ENCODE measurements at regions of chrX and their contacts with region 1.

Region 1: DNA sequence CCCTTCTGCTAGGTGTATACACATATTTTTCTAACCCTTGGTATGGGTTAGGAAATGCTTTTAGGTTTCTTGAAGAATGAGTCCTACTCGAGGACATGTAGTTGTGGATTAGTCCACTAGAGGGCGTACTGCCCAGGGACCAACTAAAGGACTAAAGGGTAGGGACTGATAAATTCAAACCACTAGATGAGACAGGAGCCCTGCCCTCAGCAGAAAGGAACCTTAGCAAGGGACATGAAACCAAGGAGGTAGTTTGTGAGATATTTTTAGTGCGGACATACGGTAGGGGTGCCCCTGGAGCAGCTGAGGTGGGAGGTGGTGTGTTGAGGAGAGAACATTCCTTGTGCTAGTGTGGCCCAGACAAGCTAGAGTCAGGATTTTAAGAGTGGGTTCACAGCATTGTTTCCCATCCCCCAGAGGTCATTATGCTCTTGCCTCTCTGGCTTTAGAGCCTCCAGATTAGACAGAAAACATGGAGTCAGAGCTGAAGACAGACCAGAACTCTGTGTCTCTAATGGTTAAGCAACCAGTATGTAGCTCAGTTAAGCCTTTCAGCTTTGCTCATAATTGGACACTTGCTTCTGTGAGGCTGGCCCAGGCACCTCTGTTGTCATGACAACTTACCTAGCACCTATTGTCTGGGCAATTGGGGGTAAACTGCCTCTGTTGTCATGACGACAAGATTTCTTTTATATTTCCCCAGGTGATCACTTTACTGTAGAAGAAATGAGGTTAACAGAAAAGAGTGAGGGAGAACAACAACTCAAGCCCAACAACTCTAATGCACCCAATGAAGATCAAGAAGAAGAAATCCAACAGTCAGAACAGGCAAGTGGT is 1.0 kb downstream of the TMEM31 start:
- DNase-seq: peak; percentile 43 to 47
- H3K4me3 ChIP-seq: no peak overlapping the region
- H3K4me3 Mint-ChIP-seq: no peak overlapping the region
- H3K27ac Mint-ChIP-seq: no peak overlapping the region
- H3K4me1 ChIP-seq: no peaks in the 10 kb centered on the region
- H3K4me1 Mint-ChIP-seq: peaks cover 6% of the 10 kb centered on the region
- H3K27me3 ChIP-seq: no peaks in the 10 kb centered on the region
- H3K27me3 Mint-ChIP-seq: no peaks in the 10 kb centered on the region
- CTCF ChIP-seq: peak; percentile 46 to 47

Region 2: DNA sequence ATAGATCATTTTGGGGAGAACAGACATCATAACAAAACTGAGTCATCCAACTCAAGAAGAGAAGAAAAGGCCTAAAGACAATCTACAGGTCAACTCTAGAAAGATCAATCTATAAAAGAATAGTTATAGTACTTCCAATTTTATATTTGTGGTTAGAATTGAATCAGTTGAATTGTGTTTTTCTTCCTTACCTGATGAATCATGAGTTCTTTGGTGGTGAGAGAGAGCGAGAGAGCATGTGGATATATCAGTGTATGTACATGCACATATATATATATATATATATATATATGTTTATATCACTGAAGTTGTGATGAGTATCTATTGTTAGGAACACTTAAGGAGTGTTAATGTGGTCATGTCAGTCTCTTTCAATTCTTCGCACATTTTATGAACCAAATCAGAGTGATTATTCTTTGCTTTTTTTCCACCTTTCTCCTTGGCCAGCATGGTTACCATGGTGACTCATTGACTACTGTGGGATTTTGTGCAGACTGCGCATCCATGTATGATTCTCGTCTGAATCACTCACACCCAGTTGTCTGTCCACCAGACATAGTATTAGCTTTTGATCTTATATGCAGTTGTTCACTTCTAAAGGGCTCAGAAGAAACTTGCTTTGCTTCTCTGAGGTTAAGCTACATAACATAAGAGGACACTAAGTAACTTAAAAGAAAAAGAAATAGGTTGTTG is 865.1 kb before region 1 on chrX:
- CTCF ChIA-PET with region 1: no interaction called
- POLR2A ChIA-PET with region 1: no interaction called
- intact Hi-C with region 1: no loop called
- DNase-seq: no peak
- H3K4me3 ChIP-seq: no peak overlapping the region
- H3K4me3 Mint-ChIP-seq: no peak overlapping the region
- H3K27ac Mint-ChIP-seq: no peak overlapping the region
- H3K4me1 ChIP-seq: no peaks in the 10 kb centered on the region
- H3K4me1 Mint-ChIP-seq: no peaks in the 10 kb centered on the region
- H3K27me3 ChIP-seq: no peaks in the 10 kb centered on the region
- H3K27me3 Mint-ChIP-seq: no peaks in the 10 kb centered on the region
- CTCF ChIP-seq: no peak

Region 3: DNA sequence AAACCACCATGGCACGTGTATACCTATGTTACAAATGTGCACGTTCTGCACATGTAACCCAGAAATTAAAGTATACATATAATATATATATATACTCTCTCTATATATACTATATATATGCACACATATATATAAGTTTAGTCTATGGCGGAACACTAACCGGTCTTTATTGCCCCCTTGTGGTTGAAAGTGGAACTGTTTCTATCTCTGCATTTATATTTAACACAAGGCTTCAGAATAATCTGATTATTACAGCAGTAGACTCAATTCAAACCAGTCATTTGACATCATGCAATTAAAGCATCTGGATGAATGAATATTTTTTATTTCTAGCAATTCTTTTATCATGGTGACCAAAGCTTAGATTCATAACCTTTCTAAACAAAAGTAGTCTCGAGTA is 105.8 kb after region 1 on chrX:
- CTCF ChIA-PET with region 1: no interaction called
- POLR2A ChIA-PET with region 1: no interaction called
- intact Hi-C with region 1: loop called (anchors 2 kb)
- DNase-seq: peak in 1 of 2 experiments; percentile 54
- H3K4me3 ChIP-seq: no peak overlapping the region
- H3K4me3 Mint-ChIP-seq: no peak overlapping the region
- H3K27ac Mint-ChIP-seq: no peak overlapping the region
- H3K4me1 ChIP-seq: peaks cover 8% of the 10 kb centered on the region; the same call in 1 of the 2 replicates
- H3K4me1 Mint-ChIP-seq: peaks cover 8% of the 10 kb centered on the region
- H3K27me3 ChIP-seq: no peaks in the 10 kb centered on the region
- H3K27me3 Mint-ChIP-seq: no peaks in the 10 kb centered on the region
- CTCF ChIP-seq: peak in 1 of 2 experiments; percentile 23

Region 4: DNA sequence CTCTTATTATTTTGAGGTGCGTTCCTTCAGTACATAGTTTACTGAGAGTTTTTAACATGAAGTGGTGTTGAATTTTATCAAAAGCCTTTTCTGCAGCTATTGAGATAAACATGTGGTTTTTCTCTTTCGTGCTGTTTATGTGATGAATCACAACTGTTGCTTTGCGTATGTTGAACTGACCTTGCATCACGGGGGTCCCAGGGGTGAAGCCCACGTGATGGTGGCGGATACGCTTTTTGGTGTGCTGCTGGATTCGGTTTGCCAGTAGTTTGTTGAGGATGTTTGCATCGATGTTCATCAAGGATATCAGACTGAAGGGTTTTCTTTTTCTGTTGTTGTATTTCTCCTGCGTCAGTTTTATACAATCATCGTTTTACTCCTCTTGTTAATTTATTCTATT is 306.4 kb after region 1 on chrX:
- CTCF ChIA-PET with region 1: no interaction called
- POLR2A ChIA-PET with region 1: no interaction called
- intact Hi-C with region 1: no loop called
- DNase-seq: no peak
- H3K4me3 ChIP-seq: no peak overlapping the region
- H3K4me3 Mint-ChIP-seq: no peak overlapping the region
- H3K27ac Mint-ChIP-seq: no peak overlapping the region
- H3K4me1 ChIP-seq: no peaks in the 10 kb centered on the region
- H3K4me1 Mint-ChIP-seq: no peaks in the 10 kb centered on the region
- H3K27me3 ChIP-seq: no peaks in the 10 kb centered on the region
- H3K27me3 Mint-ChIP-seq: no peaks in the 10 kb centered on the region
- CTCF ChIP-seq: no peak